ENCODE measurements at regions of chr1 and their contacts with region 1.

Region 1: DNA sequence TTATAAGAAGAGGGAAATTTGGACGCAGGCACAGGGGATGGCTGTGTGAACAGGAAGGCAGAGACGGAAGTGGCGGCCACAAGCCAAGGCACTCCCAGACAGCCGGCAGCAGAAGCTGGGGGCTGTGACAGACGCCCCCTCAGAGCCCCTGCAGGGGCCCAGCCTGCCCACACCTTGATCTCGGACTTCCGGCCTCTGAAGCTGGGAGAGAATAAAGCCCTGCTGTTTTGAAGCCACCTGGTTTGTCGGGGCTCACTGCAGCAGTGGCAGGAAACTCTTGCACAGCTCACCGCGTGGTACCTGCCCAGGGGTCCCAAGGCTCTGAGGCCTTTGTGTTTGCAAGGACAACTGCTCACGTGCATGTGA is 13.7 kb downstream of the MEGF6 start:
- DNase-seq: peak in 1 of 5 donors; percentile 18
- H3K4me3 ChIP-seq: no peak overlapping the region
- H3K4me3 Mint-ChIP-seq: peak overlapping the region; percentile 71 to 88 (median 78)
- H3K27ac ChIP-seq: no peak overlapping the region
- H3K27ac Mint-ChIP-seq: peak overlapping the region in 6 of 7 donors; percentile 22 to 70 (median 50)
- H3K4me1 ChIP-seq: peaks cover 20% of the 10 kb centered on the region
- H3K4me1 Mint-ChIP-seq: peaks cover 8 to 17% (median 13%) of the 10 kb centered on the region in 4 donors
- H3K27me3 ChIP-seq: no peaks in the 10 kb centered on the region
- H3K27me3 Mint-ChIP-seq: no peaks in the 10 kb centered on the region

Region 2: GRCh38 chr1:3611170-3612019 is 13.8 kb after region 1 on chr1 and contains the start of gene MEGF6:
- CTCF ChIA-PET with region 1: interaction called, 3 read pairs
- POLR2A ChIA-PET with region 1: no interaction called
- intact Hi-C with region 1: loop called (anchors 1 kb)
- DNase-seq: peak in 4 of 5 donors; percentile 20 to 60 (median 26)
- H3K4me3 ChIP-seq: no peak within 1 kb of the TSS
- H3K4me3 Mint-ChIP-seq: peak within 1 kb of the TSS; percentile 39 to 87 (median 77)
- H3K27ac ChIP-seq: no peak within 1 kb of the TSS
- H3K27ac Mint-ChIP-seq: peak within 1 kb of the TSS in 2 of 7 donors; percentile 18 to 25
- H3K4me1 ChIP-seq: peaks cover 15% of the 10 kb centered on the region
- H3K4me1 Mint-ChIP-seq: peaks cover 2 to 18% (median 5%) of the 10 kb centered on the region in 4 donors
- H3K27me3 ChIP-seq: peaks cover 5% of the 10 kb centered on the region
- H3K27me3 Mint-ChIP-seq: peaks cover 9 to 13% of the 10 kb centered on the region in 2 donors
- total RNA-seq, gene MEGF6: 167 to 168 TPM